CD8-positive, alpha-beta T cell (primary cell): ENCODE measurements at regions of chr3 and their contacts with region 1.

Region 1: GRCh38 chr3:66407611-66408218 is 93.1 kb downstream of the LRIG1 start:
- DNase-seq: peak; percentile 55 to 84 (median 74)
- ATAC-seq: peak; percentile 86
- H3K4me3 ChIP-seq: no peak overlapping the region
- H3K4me3 Mint-ChIP-seq: no peak overlapping the region
- H3K27ac ChIP-seq: no peak overlapping the region
- H3K27ac Mint-ChIP-seq: no peak overlapping the region
- H3K4me1 ChIP-seq: no peaks in the 10 kb centered on the region
- H3K4me1 Mint-ChIP-seq: no peaks in the 10 kb centered on the region
- H3K27me3 ChIP-seq: no peaks in the 10 kb centered on the region
- H3K27me3 Mint-ChIP-seq: no peaks in the 10 kb centered on the region
- CTCF ChIP-seq: peak; percentile 78

Region 2: DNA sequence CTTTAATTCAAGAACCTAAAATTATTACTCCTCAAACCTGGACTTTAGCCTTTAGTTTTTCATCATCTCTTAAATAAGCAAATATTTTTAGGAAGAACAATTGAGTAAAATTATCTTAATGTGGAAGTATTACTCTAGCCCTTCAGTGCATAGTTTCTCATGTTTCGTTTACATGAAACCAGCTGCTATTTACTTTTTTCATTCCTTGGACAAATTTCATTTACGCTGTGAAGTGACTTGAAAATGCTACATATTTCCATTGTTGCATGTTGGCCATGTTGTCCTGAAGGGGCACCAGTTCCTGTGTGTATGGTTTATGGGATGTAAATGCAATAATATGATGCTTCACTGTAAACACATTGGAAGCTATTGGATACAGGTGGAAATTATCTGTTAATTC is 137.0 kb before region 1 on chr3:
- CTCF ChIA-PET with region 1: interaction called, 11 read pairs
- POLR2A ChIA-PET with region 1: no interaction called
- intact Hi-C with region 1: no loop called
- DNase-seq: no peak
- ATAC-seq: no peak
- H3K4me3 ChIP-seq: no peak overlapping the region
- H3K4me3 Mint-ChIP-seq: no peak overlapping the region
- H3K27ac ChIP-seq: no peak overlapping the region
- H3K27ac Mint-ChIP-seq: no peak overlapping the region
- H3K4me1 ChIP-seq: no peaks in the 10 kb centered on the region
- H3K4me1 Mint-ChIP-seq: peaks cover 3% of the 10 kb centered on the region
- H3K27me3 ChIP-seq: no peaks in the 10 kb centered on the region
- H3K27me3 Mint-ChIP-seq: no peaks in the 10 kb centered on the region
- CTCF ChIP-seq: no peak

Region 3: DNA sequence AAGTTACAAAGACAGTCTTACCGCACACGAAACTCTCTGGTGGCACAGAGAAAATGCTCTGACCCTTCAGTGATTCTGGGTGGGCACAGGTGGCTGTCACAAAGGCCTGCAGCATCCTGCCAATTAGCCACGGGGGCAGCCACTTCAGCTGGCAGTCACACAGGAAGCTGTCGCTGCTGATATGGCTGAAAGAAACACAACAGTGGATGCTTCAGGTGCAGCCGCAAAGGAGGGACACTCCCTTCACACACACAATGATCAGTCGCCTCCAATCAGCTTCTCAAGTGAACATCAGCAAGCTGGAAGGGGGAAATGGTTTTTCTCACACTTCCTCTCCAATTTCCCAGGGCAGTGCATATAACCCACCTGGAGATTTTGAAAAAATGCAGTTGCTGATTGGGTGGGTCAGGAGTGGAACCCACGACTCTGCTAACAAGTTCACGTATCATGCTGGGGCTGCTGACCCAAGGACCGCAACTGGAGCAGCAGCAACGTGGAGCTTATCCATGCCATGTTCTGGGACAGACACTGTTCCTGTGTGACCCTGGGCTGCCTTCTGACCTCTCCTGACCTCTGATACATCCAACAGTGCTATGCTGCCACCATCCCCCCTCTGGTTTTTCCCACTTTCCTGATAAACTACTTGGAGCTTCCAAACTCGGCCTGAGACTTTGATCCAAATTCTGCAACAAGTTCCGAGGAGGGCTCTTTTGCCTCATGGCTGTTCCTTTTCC is 13.5 kb before region 1 on chr3:
- CTCF ChIA-PET with region 1: interaction called, 28 read pairs
- POLR2A ChIA-PET with region 1: interaction called, 3 read pairs
- intact Hi-C with region 1: no loop called
- DNase-seq: peak; percentile 32 to 84 (median 60)
- ATAC-seq: peak; percentile 93
- H3K4me3 ChIP-seq: peak overlapping the region; percentile 16 to 35
- H3K4me3 Mint-ChIP-seq: peak overlapping the region; percentile 85
- H3K27ac ChIP-seq: peak overlapping the region; percentile 57 to 72
- H3K27ac Mint-ChIP-seq: peak overlapping the region; percentile 95
- H3K4me1 ChIP-seq: peaks cover 24% of the 10 kb centered on the region
- H3K4me1 Mint-ChIP-seq: peaks cover 56% of the 10 kb centered on the region
- H3K27me3 ChIP-seq: no peaks in the 10 kb centered on the region
- H3K27me3 Mint-ChIP-seq: no peaks in the 10 kb centered on the region
- CTCF ChIP-seq: no peak

Region 4: DNA sequence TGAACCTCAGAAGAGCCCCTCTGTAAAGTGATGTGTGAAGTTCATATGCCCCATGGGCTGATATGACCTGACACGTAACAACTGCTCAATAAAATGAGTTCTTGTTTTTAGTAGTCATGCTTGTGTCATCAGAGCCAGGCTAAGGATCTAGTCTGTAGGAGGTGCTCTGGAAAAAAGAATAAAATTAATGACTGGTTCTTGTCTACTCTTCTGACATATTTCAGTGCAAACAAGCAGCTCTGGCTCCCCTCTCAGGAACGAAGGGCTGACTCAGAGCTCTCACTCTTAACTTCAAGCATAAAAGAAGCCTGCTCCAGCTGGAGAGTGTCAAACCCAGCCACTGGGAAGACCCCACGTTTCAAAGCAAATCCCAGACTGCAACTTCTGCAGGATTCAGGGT is 16.1 kb after region 1 on chr3:
- CTCF ChIA-PET with region 1: interaction called, 13 read pairs
- POLR2A ChIA-PET with region 1: no interaction called
- intact Hi-C with region 1: no loop called
- DNase-seq: no peak
- ATAC-seq: no peak
- H3K4me3 ChIP-seq: no peak overlapping the region
- H3K4me3 Mint-ChIP-seq: no peak overlapping the region
- H3K27ac ChIP-seq: no peak overlapping the region
- H3K27ac Mint-ChIP-seq: peak overlapping the region; percentile 69
- H3K4me1 ChIP-seq: no peaks in the 10 kb centered on the region
- H3K4me1 Mint-ChIP-seq: peaks cover 25% of the 10 kb centered on the region
- H3K27me3 ChIP-seq: no peaks in the 10 kb centered on the region
- H3K27me3 Mint-ChIP-seq: no peaks in the 10 kb centered on the region
- CTCF ChIP-seq: no peak

Region 5: GRCh38 chr3:66500576-66501482 is 93.1 kb after region 1 on chr3 and contains the start of gene LRIG1:
- CTCF ChIA-PET with region 1: interaction called, 8 read pairs
- POLR2A ChIA-PET with region 1: interaction called, 4 read pairs
- intact Hi-C with region 1: loop called (anchors 2 to 5 kb)
- DNase-seq: peak; percentile 95 to 98 (median 97)
- ATAC-seq: peak; percentile 94
- H3K4me3 ChIP-seq: peak within 1 kb of the TSS; percentile 54 to 66
- H3K4me3 Mint-ChIP-seq: peak within 1 kb of the TSS; percentile 94
- H3K27ac ChIP-seq: peak within 1 kb of the TSS in 1 of 2 experiments; percentile 29
- H3K27ac Mint-ChIP-seq: peak within 1 kb of the TSS; percentile 69
- H3K4me1 ChIP-seq: peaks cover 35% of the 10 kb centered on the region
- H3K4me1 Mint-ChIP-seq: peaks cover 60% of the 10 kb centered on the region
- H3K27me3 ChIP-seq: peaks cover 0 to 4% of the 10 kb centered on the region in 2 experiments
- H3K27me3 Mint-ChIP-seq: peaks cover 8% of the 10 kb centered on the region
- CTCF ChIP-seq: peak; percentile 54
- total RNA-seq, gene LRIG1: 38.2 to 39.4 TPM

Region 6: DNA sequence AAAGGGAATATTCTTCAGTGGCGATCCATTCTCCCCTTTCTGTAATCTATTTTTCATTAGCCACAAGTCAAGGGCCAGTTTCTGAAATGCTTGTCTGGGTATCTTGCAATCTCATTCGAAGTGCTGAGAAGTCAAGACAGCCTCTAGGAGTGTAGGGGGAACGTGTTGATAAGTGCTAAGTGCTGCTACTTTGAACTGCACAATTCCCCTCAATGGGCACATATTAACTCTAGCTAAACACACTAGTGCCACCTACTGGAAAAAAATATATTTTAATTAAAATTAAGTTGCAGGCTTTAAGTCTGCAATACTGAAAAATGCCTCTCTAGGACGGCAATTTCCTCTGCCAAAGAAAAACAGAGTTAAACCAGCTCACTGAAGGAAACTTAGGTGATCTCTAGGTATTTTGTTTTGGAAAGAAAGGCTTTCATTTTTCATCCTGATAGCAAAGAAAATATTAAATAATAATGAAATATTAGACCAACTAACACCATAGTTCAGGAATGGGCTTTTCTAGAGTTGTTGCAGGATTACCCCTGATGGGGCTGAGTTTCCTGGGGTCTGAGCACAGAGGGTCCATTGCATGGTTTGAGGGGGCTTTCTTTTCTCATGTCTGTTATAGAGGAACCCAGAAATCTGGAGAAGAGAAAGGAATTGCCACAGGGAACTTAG is 408.5 kb after region 1 on chr3:
- CTCF ChIA-PET with region 1: interaction called, 134 read pairs
- POLR2A ChIA-PET with region 1: no interaction called
- intact Hi-C with region 1: loop called (anchors 1 kb)
- DNase-seq: peak in 3 of 9 experiments; percentile 6 to 63 (median 53)
- ATAC-seq: peak; percentile 73
- H3K4me3 ChIP-seq: no peak overlapping the region
- H3K4me3 Mint-ChIP-seq: no peak overlapping the region
- H3K27ac ChIP-seq: no peak overlapping the region
- H3K27ac Mint-ChIP-seq: no peak overlapping the region
- H3K4me1 ChIP-seq: no peaks in the 10 kb centered on the region
- H3K4me1 Mint-ChIP-seq: no peaks in the 10 kb centered on the region
- H3K27me3 ChIP-seq: no peaks in the 10 kb centered on the region
- H3K27me3 Mint-ChIP-seq: peaks cover 7% of the 10 kb centered on the region
- CTCF ChIP-seq: peak; percentile 70